Activated CD4-positive, alpha-beta T cell treated with anti-CD3 and anti-CD28 coated beads for 36 hours (primary cell): ENCODE measurements at regions of chr11 and their contacts with region 1.

Region 1: DNA sequence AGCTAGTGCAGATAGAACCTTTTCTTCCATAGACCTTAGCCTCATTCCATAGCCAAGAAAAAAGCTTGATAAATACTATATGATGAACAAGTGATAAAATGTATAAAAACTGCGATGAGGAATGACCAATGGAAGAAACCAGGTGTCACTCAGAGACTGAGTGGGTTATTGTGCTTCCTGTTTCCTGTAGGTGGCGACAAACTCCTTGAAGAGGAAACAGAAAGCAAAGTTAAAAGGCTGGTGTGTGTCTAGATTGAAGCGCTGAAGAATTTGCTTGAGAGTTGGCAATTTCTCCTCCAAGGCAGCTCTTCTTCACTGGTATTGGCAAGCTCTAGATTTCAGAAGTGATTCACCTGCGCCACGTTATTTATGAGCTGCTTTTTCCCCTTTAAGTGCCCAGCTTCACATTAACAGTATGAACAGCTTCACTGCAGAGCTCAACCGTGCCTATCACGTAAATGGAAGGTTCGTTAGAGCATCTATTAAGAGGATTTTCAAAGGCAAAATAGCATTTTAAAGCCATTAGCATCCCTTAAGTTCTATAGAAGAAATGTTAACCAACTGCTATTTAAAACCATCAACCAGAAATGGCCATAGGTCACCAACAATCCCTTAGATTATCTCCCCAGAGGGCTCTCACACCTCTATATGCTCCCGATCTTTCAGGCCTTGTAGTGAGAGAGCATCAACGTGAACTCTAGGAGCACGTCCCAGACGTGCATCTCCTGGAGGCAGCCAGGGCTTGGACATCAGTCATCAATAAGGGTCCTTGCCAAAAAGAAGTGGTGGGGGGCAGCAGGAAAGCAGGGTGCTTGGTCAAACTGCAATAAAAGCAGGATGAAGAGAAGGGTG is 179.4 kb downstream of the CADM1 start:
- DNase-seq: peak; percentile 30
- ATAC-seq: peak; percentile 68
- H3K4me3 Mint-ChIP-seq: no peak overlapping the region
- H3K27ac Mint-ChIP-seq: no peak overlapping the region
- H3K4me1 Mint-ChIP-seq: no peaks in the 10 kb centered on the region
- H3K27me3 Mint-ChIP-seq: peaks cover 15% of the 10 kb centered on the region

Region 2: DNA sequence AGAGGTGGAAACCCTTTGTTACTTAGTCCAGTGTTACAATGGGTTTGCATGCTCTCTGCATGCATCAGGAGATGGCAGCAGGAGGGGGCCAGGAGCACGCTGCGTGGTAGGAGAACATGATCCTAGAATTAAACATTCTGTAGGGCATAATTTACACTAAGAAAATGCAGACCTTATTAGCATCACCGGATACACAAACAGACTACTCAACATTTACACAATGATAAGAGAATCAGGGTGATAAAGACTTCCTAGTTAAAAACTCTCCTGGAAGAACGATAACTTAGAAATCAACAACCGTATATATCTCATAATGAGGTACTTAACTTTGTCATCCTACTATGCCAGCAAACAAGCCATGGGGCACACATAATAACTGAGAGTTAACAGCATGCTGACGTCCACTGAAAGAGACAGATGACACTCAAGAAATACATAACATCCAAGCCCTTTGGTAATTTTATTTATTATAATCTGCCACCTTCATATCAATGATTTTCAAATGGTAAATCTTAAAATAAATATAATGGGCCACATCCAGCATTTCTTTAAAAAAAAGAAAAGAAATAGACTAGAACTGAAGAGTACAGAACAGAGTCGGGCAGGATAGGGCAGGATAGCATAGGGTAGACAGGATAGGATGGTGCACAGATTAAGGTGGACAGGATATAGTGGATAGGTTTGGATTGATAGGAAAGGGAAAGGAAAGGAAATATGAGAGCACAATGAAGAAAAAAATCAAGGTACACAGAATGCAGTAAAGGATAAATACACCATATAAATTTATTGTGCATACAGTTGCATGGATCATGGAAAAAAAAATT is 151.9 kb after region 1 on chr11:
- CTCF ChIA-PET with region 1: no interaction called
- POLR2A ChIA-PET with region 1: no interaction called
- intact Hi-C with region 1: no loop called
- DNase-seq: no peak
- ATAC-seq: no peak
- H3K4me3 Mint-ChIP-seq: no peak overlapping the region
- H3K27ac Mint-ChIP-seq: no peak overlapping the region
- H3K4me1 Mint-ChIP-seq: no peaks in the 10 kb centered on the region
- H3K27me3 Mint-ChIP-seq: peaks cover 4% of the 10 kb centered on the region

Region 3: DNA sequence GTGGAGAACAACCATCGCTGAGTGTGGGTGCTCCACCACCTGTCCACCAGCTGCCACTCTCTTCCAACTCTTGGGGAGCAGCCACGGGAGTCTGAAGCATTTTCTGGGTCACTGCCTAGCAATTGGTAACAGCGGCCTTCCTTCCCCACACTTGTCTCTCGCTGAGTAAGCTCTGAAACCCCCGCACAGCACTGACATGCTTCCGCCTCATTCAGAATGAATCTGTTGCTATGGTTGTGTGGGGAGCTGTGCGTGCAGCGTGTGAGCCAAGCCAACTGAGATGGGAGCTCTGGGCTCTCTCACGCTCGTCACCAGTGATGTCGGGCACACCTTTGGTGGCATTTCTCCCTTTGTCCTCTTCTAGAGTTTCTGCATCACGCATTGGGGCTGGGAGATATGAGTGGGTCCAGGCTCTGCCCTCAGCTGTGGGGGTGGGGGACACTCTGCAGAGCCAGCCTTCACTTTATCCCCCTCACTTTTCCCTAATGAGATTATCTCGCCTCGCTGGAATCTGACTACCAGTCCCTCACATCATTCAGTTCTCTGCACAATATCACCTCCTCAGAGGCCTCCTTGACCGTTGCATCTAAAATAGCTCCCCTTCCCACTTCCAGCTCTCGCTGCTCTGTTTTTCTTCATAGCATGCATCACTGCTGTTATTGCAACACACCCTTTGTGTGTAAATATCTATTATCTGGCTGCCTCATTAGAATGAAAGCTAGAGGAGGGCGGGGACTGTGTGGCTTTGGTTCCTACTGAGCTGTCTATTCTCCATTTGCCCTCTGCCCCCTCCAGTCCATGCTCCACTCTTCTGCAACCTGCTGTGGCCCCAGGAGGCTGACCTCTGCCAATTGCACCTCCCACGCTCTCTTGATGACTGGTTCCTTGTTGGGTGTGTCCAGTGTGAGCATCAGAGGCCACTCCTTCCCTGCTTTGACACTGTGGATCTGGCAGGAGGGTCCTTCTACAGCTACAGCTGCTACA is 749.3 kb after region 1 on chr11:
- CTCF ChIA-PET with region 1: no interaction called
- POLR2A ChIA-PET with region 1: no interaction called
- intact Hi-C with region 1: loop called in 1 of 2 experiments (anchors 10 kb)
- DNase-seq: peak; percentile 11
- ATAC-seq: peak; percentile 33
- H3K4me3 Mint-ChIP-seq: no peak overlapping the region
- H3K27ac Mint-ChIP-seq: no peak overlapping the region
- H3K4me1 Mint-ChIP-seq: no peaks in the 10 kb centered on the region
- H3K27me3 Mint-ChIP-seq: peaks cover 4% of the 10 kb centered on the region

Region 4: GRCh38 chr11:116224154-116224888 is 899.5 kb after region 1 on chr11:
- CTCF ChIA-PET with region 1: interaction called, 3 read pairs
- POLR2A ChIA-PET with region 1: no interaction called
- intact Hi-C with region 1: loop called (anchors 1 to 2 kb)
- DNase-seq: peak; percentile 64
- ATAC-seq: no peak
- H3K4me3 Mint-ChIP-seq: no peak overlapping the region
- H3K27ac Mint-ChIP-seq: no peak overlapping the region
- H3K4me1 Mint-ChIP-seq: no peaks in the 10 kb centered on the region
- H3K27me3 Mint-ChIP-seq: peaks cover 6% of the 10 kb centered on the region

Region 5: GRCh38 chr11:116499396-116500003 is 1174.7 kb after region 1 on chr11:
- CTCF ChIA-PET with region 1: no interaction called
- POLR2A ChIA-PET with region 1: no interaction called
- intact Hi-C with region 1: loop called in 1 of 2 experiments (anchors 5 kb)
- DNase-seq: peak; percentile 86
- ATAC-seq: no peak
- H3K4me3 Mint-ChIP-seq: no peak overlapping the region
- H3K27ac Mint-ChIP-seq: no peak overlapping the region
- H3K4me1 Mint-ChIP-seq: no peaks in the 10 kb centered on the region
- H3K27me3 Mint-ChIP-seq: peaks cover 35% of the 10 kb centered on the region